ENCODE measurements at regions of chr14 and their contacts with region 1.

Region 1: GRCh38 chr14:68392393-68393141 is 400.3 kb downstream of the ZFP36L1 start:
- DNase-seq: peak; percentile 82 to 88 (median 87)
- H3K4me3 ChIP-seq: peak overlapping the region in 1 of 3 experiments; percentile 45
- H3K4me3 Mint-ChIP-seq: peak overlapping the region in 1 of 2 donors; percentile 68
- H3K27ac ChIP-seq: peak overlapping the region; percentile 81 to 83
- H3K27ac Mint-ChIP-seq: peak overlapping the region; percentile 83 to 99 (median 95)
- H3K4me1 ChIP-seq: peaks cover 57 to 65% of the 10 kb centered on the region in 2 donors
- H3K4me1 Mint-ChIP-seq: peaks cover 65% of the 10 kb centered on the region
- H3K27me3 ChIP-seq: no peaks in the 10 kb centered on the region
- H3K27me3 Mint-ChIP-seq: no peaks in the 10 kb centered on the region
- CTCF ChIP-seq: no peak

Region 2: DNA sequence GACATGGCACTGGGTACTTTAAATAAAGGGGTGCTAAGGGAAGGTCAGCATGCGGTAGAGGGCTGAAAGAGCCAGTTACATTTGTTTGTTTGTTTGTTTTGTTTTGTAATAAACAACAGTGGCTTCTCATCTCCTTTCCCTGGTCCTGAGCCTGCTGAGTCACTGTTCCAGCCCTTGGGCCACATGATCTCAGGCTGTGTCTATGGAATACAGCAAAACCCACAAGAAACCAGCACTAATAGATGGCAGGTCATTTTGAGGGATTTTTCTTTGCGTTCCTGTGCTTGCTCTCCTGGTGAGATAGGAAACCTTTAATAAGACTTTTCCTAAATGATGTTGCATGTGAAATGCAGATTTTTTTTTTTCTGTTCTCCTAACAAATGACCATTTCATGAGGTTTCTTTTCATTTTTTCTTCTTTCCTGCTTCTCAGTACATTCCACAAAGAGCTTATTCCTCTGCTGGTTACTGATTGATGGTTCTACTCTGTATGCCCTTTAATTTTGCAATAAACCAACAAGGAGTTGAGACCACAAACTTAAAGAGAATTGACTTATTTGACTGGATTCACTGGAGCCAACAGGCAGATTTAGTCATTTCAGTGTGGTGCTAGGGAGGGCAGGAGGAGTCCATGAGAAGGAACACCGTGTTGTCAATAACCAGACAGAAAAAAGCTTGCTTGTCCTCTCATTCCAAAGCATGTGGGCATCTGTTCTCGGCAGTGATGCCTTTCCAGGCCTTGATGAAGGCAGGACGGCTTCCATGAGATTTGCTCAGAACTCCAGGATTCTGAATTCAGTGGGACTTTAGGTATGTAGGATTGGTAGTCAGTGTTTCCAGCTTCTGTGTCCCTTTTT is 113.8 kb before region 1 on chr14:
- intact Hi-C with region 1: loop called in 1 of 2 experiments (anchors 10 kb)
- DNase-seq: no peak
- H3K4me3 ChIP-seq: no peak overlapping the region
- H3K4me3 Mint-ChIP-seq: no peak overlapping the region
- H3K27ac ChIP-seq: no peak overlapping the region
- H3K27ac Mint-ChIP-seq: no peak overlapping the region
- H3K4me1 ChIP-seq: peaks cover 19 to 24% of the 10 kb centered on the region in 2 donors
- H3K4me1 Mint-ChIP-seq: peaks cover 44% of the 10 kb centered on the region
- H3K27me3 ChIP-seq: no peaks in the 10 kb centered on the region
- H3K27me3 Mint-ChIP-seq: no peaks in the 10 kb centered on the region
- CTCF ChIP-seq: no peak

Region 3: DNA sequence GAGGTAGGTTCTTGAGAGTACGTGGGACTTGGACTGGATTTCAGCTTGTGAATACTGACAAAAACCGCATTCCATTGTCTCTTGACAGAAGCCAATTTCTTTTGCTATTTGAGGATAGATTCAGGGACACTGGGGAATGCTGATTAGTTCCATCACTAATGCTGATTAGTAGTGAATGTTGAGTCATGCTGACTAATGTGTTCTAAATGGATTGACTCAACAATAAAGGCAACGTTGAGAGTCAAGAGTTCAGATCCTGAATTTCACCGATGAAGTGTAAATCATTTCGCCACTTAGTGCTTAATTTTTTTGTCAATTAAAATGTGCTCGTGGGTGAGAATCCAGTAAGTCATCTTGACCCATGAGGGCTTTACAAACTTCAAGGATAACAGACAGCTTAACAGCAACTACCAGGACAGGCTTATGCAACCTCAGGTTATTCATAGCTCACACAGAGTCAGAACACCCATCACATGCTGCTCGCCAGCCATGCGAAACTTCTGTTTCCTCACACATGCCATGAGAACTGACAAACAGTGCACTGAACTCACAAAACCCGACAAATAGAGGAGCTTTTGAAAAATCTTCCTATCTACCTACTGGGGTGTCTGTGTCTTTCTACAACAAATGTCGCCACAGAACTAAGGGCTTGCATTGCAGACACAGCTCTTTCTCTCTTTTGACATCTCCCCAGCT is 83.8 kb after region 1 on chr14:
- intact Hi-C with region 1: loop called in 1 of 2 experiments (anchors 10 kb)
- DNase-seq: peak; percentile 88 to 94 (median 92)
- H3K4me3 ChIP-seq: peak overlapping the region in 1 of 3 experiments; percentile 19
- H3K4me3 Mint-ChIP-seq: no peak overlapping the region
- H3K27ac ChIP-seq: peak overlapping the region; percentile 90 to 92
- H3K27ac Mint-ChIP-seq: peak overlapping the region; percentile 92 to 95 (median 94)
- H3K4me1 ChIP-seq: peaks cover 51 to 53% of the 10 kb centered on the region in 2 donors
- H3K4me1 Mint-ChIP-seq: peaks cover 59% of the 10 kb centered on the region
- H3K27me3 ChIP-seq: no peaks in the 10 kb centered on the region
- H3K27me3 Mint-ChIP-seq: peaks cover 0 to 3% (median 0%) of the 10 kb centered on the region in 3 donors
- CTCF ChIP-seq: no peak

Region 4: DNA sequence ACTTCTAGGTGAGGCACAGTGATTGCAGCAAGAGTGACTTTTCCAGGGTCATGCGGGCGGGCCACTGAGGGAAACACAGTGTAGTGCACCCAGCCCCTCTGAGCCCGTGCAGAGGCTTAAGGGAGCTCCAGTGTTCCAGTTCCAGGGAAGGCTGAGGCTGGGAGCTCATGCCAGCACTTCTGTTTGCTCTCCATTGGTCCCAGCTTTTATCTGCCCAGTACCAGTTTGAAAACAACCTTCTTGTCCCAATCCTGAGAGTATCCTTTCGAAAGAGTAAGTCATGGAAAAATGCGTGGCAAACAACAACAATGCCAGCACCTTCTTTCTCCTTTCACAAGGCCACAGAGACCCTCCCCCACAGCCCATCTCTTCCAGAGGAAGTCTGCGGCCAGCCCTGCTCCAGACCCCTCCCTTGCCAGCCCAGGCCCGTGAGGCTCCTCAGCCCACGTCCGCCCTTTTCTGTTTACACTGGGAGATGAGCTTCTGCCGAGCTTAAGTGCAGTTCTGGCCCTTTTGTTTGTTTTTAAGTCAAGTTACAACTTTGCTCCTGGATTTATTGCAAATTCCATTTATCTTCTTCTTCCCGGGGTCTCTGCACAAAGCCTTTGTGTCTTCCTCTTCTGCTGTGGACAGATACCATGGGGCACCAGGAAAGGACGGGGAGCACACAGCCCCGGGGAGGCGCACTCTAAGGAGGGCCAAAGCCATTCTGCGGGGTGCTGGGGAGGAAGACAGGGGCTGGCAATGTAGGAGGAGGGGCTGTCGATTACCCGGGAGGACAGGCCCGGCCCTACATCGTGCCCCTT is 214.7 kb after region 1 on chr14:
- intact Hi-C with region 1: loop called in 1 of 2 experiments (anchors 10 kb)
- DNase-seq: no peak
- H3K4me3 ChIP-seq: peak overlapping the region in 1 of 3 experiments; percentile 38
- H3K4me3 Mint-ChIP-seq: peak overlapping the region in 1 of 2 donors; percentile 65
- H3K27ac ChIP-seq: peak overlapping the region; percentile 80 to 90
- H3K27ac Mint-ChIP-seq: peak overlapping the region in 3 of 7 donors; percentile 87 to 95 (median 92)
- H3K4me1 ChIP-seq: peaks cover 45 to 62% of the 10 kb centered on the region in 2 donors
- H3K4me1 Mint-ChIP-seq: peaks cover 10% of the 10 kb centered on the region
- H3K27me3 ChIP-seq: no peaks in the 10 kb centered on the region
- H3K27me3 Mint-ChIP-seq: peaks cover 2 to 7% (median 2%) of the 10 kb centered on the region in 3 donors
- CTCF ChIP-seq: no peak

Measured in CD14-positive monocyte (primary cell).